ENCODE measurements at regions of chr2 and their contacts with region 1.

Region 1: DNA sequence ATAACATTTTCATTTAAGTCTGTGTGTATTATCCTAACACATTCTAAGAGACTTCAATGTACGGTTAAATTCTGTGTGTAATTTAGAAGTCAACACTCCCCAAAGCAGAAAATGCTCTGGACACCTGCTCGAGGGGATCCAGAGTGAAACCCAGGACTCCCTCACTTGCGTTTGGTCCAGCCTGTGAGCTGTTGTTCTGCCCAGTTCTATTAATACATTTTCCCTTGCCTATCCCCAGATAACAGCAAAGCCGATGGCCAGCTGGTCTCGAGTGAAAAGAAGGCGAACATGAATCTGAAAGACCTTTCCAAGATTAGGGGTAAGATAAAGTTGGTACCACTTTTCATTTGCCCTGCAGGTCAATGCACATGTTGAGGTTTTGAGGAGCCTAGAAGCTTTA is 31.0 kb upstream of the SP100 start:
- DNase-seq: no peak
- H3K4me3 ChIP-seq: no peak overlapping the region
- H3K27ac ChIP-seq: no peak overlapping the region
- H3K4me1 ChIP-seq: no peaks in the 10 kb centered on the region
- H3K27me3 ChIP-seq: no peaks in the 10 kb centered on the region
- CTCF ChIP-seq: no peak

Region 2: DNA sequence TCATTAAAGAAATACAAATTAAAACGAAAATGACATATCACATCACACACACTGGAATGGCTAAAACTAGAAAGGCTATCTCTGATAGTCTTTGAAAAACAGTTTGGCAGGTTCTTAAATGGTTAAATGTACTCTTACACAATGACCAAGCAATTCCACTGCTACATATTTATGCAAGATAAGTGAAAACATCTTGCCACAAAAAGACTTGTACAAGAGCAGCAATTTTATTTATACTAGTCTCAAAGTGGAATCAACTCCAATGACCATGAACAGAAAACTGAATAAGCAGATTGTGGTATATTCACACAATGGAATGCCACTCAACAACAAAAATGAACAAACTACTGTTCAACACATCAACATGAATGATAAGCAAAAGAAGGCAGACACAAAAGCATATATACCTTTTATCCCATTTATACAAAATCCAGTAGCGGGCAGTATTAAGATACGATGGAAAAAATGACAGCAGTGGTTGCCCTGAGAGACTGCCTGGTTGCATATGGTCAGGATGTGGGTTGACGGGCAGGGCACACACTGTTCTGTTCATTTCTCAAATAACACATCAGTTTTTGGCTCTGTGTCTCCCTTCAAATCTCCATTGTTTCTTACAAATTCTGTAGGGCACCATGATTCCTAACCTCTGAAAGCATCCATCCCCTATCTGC is 56.4 kb after region 1 on chr2:
- intact Hi-C with region 1: loop called (anchors 5 kb)
- DNase-seq: peak in 1 of 2 donors; percentile 50
- H3K4me3 ChIP-seq: no peak overlapping the region
- H3K27ac ChIP-seq: peak overlapping the region; percentile 32 to 45
- H3K4me1 ChIP-seq: peaks cover 0 to 50% (median 15%) of the 10 kb centered on the region in 4 donors
- H3K27me3 ChIP-seq: no peaks in the 10 kb centered on the region
- CTCF ChIP-seq: no peak

Region 3: GRCh38 chr2:230472621-230473018 is 87.6 kb after region 1 on chr2:
- intact Hi-C with region 1: no loop called
- DNase-seq: no peak
- H3K4me3 ChIP-seq: no peak overlapping the region
- H3K27ac ChIP-seq: no peak overlapping the region
- H3K4me1 ChIP-seq: no peaks in the 10 kb centered on the region
- H3K27me3 ChIP-seq: no peaks in the 10 kb centered on the region
- CTCF ChIP-seq: no peak